HEK293 (cell line): ENCODE measurements at regions of chr11 and their contacts with region 1.

Region 1: DNA sequence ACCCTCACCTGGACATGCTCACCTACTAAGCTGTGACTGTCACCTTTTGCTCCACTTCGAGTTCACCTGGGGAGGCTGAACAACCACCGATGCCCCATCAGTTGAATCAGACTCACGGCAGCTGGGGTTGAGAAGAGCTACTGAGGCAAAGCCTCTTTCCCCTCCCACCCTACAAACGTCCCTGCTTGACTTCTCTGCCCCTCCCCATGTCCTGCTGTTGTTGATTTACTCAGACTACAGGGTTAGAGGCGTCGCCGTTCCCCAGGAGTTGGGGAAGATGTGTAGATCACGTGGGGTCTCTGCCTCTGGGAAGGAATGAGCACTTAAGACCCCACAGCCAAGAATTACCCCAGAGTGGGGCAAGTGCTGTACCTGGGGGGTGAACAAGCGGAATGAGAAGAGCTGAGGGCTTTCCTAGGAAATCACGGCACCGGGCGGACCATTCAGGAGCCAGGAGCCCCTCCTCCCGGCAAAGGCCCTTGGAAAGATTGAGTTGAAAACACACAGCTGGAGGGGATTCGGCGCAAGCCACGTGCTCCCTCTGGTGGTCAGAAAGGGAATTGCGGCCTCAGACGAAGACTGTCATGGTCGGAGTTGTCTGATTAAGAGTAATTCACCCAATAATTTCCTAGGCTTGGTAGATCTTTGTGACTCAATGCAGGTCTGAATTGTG is 7.0 kb downstream of the FXYD2 start:
- H3K4me3 ChIP-seq: no peak overlapping the region
- H3K27ac ChIP-seq: no peak overlapping the region
- H3K4me1 ChIP-seq: peaks cover 3% of the 10 kb centered on the region; the same call in 1 of the 2 replicates
- CTCF ChIP-seq: peak; percentile 83

Region 2: GRCh38 chr11:117443266-117444195 is 374.0 kb before region 1 on chr11:
- CTCF ChIA-PET with region 1: interaction called, 17 read pairs
- POLR2A ChIA-PET with region 1: no interaction called
- H3K4me3 ChIP-seq: no peak overlapping the region
- H3K27ac ChIP-seq: no peak overlapping the region
- H3K4me1 ChIP-seq: no peaks in the 10 kb centered on the region
- CTCF ChIP-seq: no peak

Region 3: GRCh38 chr11:117828611-117829368 is 11.3 kb after region 1 on chr11:
- CTCF ChIA-PET with region 1: interaction called, 78 read pairs
- POLR2A ChIA-PET with region 1: no interaction called
- H3K4me3 ChIP-seq: no peak overlapping the region
- H3K27ac ChIP-seq: no peak overlapping the region
- H3K4me1 ChIP-seq: no peaks in the 10 kb centered on the region
- CTCF ChIP-seq: no peak

Region 4: GRCh38 chr11:117940736-117941135 is 123.2 kb after region 1 on chr11:
- CTCF ChIA-PET with region 1: interaction called, 223 read pairs
- POLR2A ChIA-PET with region 1: no interaction called
- H3K4me3 ChIP-seq: no peak overlapping the region
- H3K27ac ChIP-seq: no peak overlapping the region
- H3K4me1 ChIP-seq: no peaks in the 10 kb centered on the region
- CTCF ChIP-seq: no peak

Region 5: GRCh38 chr11:118051611-118052461 is 234.3 kb after region 1 on chr11:
- CTCF ChIA-PET with region 1: interaction called, 66 read pairs
- POLR2A ChIA-PET with region 1: no interaction called
- H3K4me3 ChIP-seq: no peak overlapping the region
- H3K27ac ChIP-seq: no peak overlapping the region
- H3K4me1 ChIP-seq: no peaks in the 10 kb centered on the region
- CTCF ChIP-seq: no peak